Naive thymus-derived CD4-positive, alpha-beta T cell (primary cell): ENCODE measurements at regions of chr18 and their contacts with region 1.

Region 1: GRCh38 chr18:21997207-21998143 is 171.9 kb upstream of the GATA6 start:
- DNase-seq: peak in 5 of 9 donors; percentile 3 to 21 (median 14)
- ATAC-seq: peak; percentile 70
- H3K4me3 ChIP-seq: no peak overlapping the region
- H3K4me3 Mint-ChIP-seq: no peak overlapping the region
- H3K27ac ChIP-seq: no peak overlapping the region
- H3K27ac Mint-ChIP-seq: no peak overlapping the region
- H3K4me1 ChIP-seq: no peaks in the 10 kb centered on the region
- H3K4me1 Mint-ChIP-seq: peaks cover 0 to 6% (median 3%) of the 10 kb centered on the region in 7 donors
- H3K27me3 ChIP-seq: no peaks in the 10 kb centered on the region
- H3K27me3 Mint-ChIP-seq: peaks cover 0 to 4% (median under 1%) of the 10 kb centered on the region in 5 donors

Region 2: DNA sequence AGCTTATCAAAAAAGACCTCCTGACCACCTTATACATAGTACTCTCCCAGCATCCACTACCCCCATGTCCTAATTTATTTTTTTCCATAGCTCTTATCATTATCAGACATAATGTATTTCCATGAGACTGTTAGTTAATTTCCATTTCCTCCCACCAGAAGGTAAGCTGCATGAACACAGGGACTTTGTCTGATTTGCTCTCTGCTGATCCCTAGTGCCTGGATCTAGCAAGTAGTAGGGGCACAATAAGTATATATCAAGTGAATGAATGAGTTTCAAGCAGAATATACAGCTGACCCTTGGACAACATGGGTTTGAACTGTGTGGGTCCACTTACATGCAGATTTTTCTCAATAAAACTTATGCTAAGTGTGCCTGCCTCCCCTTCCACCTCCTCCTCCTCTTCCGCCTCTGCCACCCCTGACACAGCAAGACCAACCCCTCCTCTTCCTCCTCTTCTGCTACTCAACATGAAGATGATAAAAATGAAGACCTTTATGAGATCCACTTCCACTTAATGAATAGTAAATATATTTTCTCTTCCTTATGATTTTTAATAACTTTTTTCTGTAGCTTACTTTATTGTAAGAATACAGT is 366.5 kb after region 1 on chr18:
- CTCF ChIA-PET with region 1: no interaction called
- POLR2A ChIA-PET with region 1: no interaction called
- intact Hi-C with region 1: loop called in 1 of 2 experiments (anchors 5 kb)
- DNase-seq: no peak
- ATAC-seq: peak; percentile 38
- H3K4me3 ChIP-seq: no peak overlapping the region
- H3K4me3 Mint-ChIP-seq: no peak overlapping the region
- H3K27ac ChIP-seq: no peak overlapping the region
- H3K27ac Mint-ChIP-seq: no peak overlapping the region
- H3K4me1 ChIP-seq: no peaks in the 10 kb centered on the region
- H3K4me1 Mint-ChIP-seq: no peaks in the 10 kb centered on the region
- H3K27me3 ChIP-seq: no peaks in the 10 kb centered on the region
- H3K27me3 Mint-ChIP-seq: peaks cover 0 to 5% (median 0%) of the 10 kb centered on the region in 5 donors

Region 3: GRCh38 chr18:22703883-22704585 is 706.6 kb after region 1 on chr18:
- CTCF ChIA-PET with region 1: no interaction called
- POLR2A ChIA-PET with region 1: no interaction called
- intact Hi-C with region 1: loop called in 1 of 2 experiments (anchors 10 kb)
- DNase-seq: peak in 3 of 9 donors; percentile 2 to 29 (median 7)
- ATAC-seq: peak; percentile 52
- H3K4me3 ChIP-seq: no peak overlapping the region
- H3K4me3 Mint-ChIP-seq: no peak overlapping the region
- H3K27ac ChIP-seq: no peak overlapping the region
- H3K27ac Mint-ChIP-seq: no peak overlapping the region
- H3K4me1 ChIP-seq: no peaks in the 10 kb centered on the region
- H3K4me1 Mint-ChIP-seq: no peaks in the 10 kb centered on the region
- H3K27me3 ChIP-seq: no peaks in the 10 kb centered on the region
- H3K27me3 Mint-ChIP-seq: peaks cover 2 to 20% (median 14%) of the 10 kb centered on the region in 5 donors